SK-N-SH (cell line): ENCODE measurements at regions of chr4 and their contacts with region 1.

Region 1: DNA sequence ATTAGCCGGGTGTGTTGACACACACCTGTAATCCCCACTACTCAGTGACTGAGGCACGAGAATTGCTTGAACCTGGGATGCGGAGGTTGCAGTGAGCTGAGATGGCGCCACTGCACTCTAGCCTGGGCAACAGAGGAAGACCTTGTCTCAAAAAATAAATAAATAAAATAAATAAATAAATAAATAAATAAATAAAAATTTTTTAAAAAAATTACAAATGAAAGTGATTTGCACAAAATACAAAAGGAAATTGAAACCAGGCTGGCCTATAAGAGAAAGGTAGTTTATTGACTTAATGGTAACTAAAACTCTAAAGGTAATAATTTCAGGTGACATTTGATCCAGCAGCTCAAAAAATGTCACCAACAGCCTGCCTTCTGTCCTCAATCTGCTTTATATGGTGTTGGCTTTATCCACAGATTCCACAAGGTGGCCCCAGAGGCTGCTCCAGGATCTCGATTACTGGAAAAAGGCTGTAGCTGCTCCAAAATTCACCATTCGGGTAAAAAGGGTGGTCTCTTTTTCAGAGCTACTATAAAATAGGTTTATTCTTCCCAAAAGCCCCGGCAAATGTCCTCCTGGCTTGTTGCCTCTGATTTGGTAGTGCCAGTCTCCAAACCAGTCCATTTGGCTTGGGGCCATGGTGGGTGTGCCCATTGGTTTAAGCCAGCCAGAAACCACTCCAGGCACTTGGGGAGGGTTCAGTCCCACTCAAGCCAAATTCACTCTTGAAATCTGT is 61.4 kb upstream of the TRIM2 start:
- DNase-seq: peak; percentile 72
- H3K4me3 ChIP-seq: peak overlapping the region; percentile 21 to 55; a peak in 3 of 4 replicates
- H3K27ac ChIP-seq: peak overlapping the region; percentile 66 to 98
- H3K4me1 ChIP-seq: peaks cover 20 to 36% of the 10 kb centered on the region in 2 experiments; a peak in 3 of 4 replicates
- H3K27me3 ChIP-seq: no peaks in the 10 kb centered on the region
- CTCF ChIP-seq: peak; percentile 98
- EP300 ChIP-seq: no peak
- RAD21 ChIP-seq: peak; percentile 97

Region 2: DNA sequence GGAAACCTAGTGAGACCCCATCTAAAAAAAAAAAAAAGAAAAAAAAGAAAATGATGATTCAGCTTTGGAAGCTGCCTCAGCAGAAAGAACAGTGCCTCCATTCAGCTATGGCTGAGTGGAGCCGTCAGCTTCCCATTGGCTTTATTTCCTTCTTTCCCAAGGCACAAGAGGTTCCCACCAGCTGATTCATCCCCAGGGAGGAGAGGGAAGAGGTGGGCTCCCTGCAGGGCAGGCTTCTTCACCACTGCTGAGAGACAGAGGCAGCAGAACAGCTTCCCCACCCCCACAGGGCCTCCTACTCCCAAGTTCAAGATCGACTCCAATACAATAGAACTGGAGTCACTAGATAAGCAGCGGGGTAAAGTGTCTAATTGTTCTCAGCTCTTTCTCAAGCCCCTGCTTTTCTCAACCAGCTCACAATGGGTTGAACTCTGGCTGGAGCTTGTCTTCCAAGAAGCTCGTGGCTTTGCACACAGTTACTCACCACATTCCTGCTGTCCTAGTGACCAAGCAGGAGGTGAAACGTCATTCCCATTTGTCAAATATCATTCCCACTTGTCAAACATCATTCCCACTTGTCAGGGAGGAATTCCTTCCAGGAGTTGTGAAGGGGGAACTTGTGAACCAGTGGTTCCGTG is 159.0 kb before region 1 on chr4:
- CTCF ChIA-PET with region 1: no interaction called
- POLR2A ChIA-PET with region 1: no interaction called
- DNase-seq: no peak
- H3K4me3 ChIP-seq: no peak overlapping the region
- H3K27ac ChIP-seq: no peak overlapping the region
- H3K4me1 ChIP-seq: no peaks in the 10 kb centered on the region
- H3K27me3 ChIP-seq: no peaks in the 10 kb centered on the region; the same call in 1 of the 2 replicates
- CTCF ChIP-seq: no peak
- EP300 ChIP-seq: no peak
- RAD21 ChIP-seq: no peak

Region 3: GRCh38 chr4:153117554-153117953 is 25.3 kb before region 1 on chr4:
- CTCF ChIA-PET with region 1: no interaction called
- POLR2A ChIA-PET with region 1: no interaction called
- DNase-seq: no peak
- H3K4me3 ChIP-seq: no peak overlapping the region
- H3K27ac ChIP-seq: no peak overlapping the region
- H3K4me1 ChIP-seq: peaks cover under 1 to 9% of the 10 kb centered on the region in 2 experiments; a peak in 3 of 4 replicates
- H3K27me3 ChIP-seq: no peaks in the 10 kb centered on the region
- CTCF ChIP-seq: no peak
- EP300 ChIP-seq: no peak
- RAD21 ChIP-seq: no peak

Region 4: DNA sequence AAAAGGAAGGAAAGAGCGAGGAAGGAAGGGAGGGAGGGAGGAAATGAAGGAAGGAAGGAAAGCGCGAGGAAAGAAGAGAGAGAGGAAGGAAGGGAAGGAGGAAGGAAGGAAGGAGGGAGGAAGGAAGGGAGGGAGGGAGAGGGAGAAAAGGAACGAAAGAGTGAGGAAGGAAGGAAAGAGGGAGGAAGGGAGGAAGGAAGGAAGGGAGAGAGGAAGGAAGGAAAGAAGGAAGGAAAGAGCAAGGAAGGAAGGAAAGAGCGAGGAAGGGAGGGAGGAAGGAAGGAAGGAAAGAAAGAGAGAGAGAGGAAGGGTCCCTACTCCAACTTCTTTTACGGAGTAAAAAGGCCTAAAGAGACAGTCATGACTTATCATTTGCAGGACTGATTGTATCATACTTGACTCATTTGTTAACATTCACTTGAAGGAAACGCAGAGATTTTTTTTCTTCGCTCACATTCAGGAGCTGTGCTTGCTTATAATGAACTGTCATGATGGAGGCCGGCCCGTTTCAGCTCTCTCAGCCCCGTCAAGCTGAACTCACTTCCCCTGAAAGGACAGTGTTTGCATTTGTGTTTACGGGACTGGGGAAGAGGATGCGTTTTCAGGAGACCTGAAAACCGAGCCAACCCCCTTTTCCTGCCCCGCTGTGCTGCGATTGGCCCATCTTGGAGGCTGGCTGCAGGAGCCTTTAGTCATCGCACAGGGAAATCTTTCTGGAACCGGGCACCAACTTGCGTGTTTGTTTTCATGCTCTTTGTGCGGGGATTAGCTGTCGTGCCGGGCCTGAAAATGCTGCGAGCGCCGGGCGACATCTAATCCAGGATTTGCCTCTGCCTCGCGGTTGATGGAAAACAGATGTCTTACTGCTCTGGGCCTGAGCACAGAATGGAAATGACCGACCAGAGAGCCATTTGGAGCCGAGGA is 79.2 kb after region 1 on chr4:
- CTCF ChIA-PET with region 1: interaction called, 12 read pairs
- POLR2A ChIA-PET with region 1: interaction called, 5 read pairs
- DNase-seq: peak; percentile 84
- H3K4me3 ChIP-seq: peak overlapping the region; percentile 81 to 84
- H3K27ac ChIP-seq: peak overlapping the region; percentile 97 to 98
- H3K4me1 ChIP-seq: peaks cover 0 to 10% of the 10 kb centered on the region in 2 experiments; a peak in 2 of 4 replicates
- H3K27me3 ChIP-seq: no peaks in the 10 kb centered on the region
- CTCF ChIP-seq: no peak
- EP300 ChIP-seq: peak; percentile 6 to 16; a peak in 1 of 4 replicates
- RAD21 ChIP-seq: peak; percentile 2; the same call in 1 of the 2 replicates

Region 5: DNA sequence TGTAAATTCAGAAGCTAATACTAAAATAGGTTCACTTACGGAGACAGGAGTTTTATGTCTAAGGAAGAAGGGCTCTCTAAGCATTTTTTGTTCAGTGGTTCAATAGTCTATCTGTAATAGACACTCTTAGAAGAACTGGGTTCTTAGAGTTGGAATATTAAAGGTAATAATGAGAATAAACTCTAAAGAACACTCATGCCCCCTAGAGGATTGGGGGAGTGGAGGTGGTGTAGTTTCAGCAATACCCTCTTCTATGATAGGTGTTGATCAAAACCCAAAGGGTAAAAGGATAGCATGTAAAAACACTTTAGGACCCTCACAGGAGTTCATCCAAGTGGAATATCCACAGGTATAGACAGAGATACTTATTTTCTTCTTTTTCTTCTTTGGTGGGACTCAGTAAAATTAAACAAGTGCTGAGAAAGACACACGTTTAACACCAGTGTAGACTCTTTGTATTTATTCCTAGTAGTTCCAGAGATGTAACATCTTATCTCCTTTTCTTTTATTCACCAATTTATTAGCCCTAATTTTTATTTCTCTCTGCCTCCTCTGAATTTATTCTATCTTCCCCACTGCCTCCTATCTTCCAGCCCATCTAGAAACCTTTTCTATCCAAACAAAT is 175.9 kb after region 1 on chr4:
- CTCF ChIA-PET with region 1: interaction called, 37 read pairs
- POLR2A ChIA-PET with region 1: no interaction called
- DNase-seq: peak; percentile 74
- H3K4me3 ChIP-seq: no peak overlapping the region
- H3K27ac ChIP-seq: no peak overlapping the region
- H3K4me1 ChIP-seq: peaks cover 6 to 7% of the 10 kb centered on the region in 2 experiments; a peak in 2 of 4 replicates
- H3K27me3 ChIP-seq: no peaks in the 10 kb centered on the region
- CTCF ChIP-seq: peak; percentile 83
- EP300 ChIP-seq: no peak
- RAD21 ChIP-seq: peak; percentile 91

Region 6: GRCh38 chr4:153326513-153326912 is 183.6 kb after region 1 on chr4:
- CTCF ChIA-PET with region 1: interaction called, 12 read pairs
- POLR2A ChIA-PET with region 1: no interaction called
- DNase-seq: no peak
- H3K4me3 ChIP-seq: no peak overlapping the region
- H3K27ac ChIP-seq: no peak overlapping the region
- H3K4me1 ChIP-seq: no peaks in the 10 kb centered on the region
- H3K27me3 ChIP-seq: no peaks in the 10 kb centered on the region
- CTCF ChIP-seq: no peak
- EP300 ChIP-seq: no peak
- RAD21 ChIP-seq: no peak

Region 7: DNA sequence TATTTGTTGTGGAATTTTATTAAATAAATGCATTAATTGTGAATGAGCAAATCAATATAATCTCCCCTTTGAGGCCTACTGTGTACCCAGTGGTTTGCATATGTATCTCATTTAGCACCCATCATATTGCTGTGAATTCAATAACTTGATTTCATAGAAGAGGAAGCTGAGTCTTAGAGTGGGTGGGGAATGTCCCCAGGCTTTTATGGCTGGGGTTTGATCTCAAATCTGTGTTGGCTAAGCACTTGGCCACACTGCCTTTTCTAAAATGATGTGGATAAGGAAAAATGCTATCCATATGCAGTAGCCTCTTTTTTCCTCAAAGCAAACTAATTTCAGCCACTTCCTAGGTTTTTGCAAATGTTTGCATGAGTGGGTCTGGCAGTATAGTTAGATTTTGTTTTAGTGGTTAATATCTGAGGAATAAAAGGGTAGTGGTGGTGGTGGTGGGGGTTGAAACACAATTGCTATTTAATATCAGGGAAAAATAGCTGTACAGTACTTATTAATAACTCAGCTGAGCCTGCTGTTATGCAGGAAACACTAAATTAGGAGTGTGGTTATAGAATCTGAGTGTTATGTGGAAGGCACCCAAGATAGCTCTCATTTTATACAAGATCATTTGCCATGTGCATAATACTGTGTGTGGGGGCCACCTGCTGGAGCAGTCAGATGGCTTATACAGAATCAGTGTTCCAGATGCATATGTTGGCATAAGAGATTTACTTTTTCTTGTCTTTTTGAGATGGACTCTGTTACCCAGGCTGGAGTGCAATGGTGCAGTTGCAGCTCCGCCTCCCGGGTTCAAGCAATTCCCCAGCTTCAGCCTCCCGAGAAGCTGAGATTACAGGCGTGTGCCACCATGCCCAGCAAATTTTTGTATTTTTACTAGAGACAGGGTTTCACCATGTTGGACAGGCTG is 431.3 kb after region 1 on chr4:
- CTCF ChIA-PET with region 1: interaction called, 10 read pairs
- POLR2A ChIA-PET with region 1: no interaction called
- DNase-seq: peak; percentile 58
- H3K4me3 ChIP-seq: no peak overlapping the region
- H3K27ac ChIP-seq: no peak overlapping the region; a peak in 1 of 4 replicates
- H3K4me1 ChIP-seq: peaks cover 0 to 9% of the 10 kb centered on the region in 2 experiments; a peak in 3 of 4 replicates
- H3K27me3 ChIP-seq: no peaks in the 10 kb centered on the region
- CTCF ChIP-seq: peak; percentile 82
- EP300 ChIP-seq: no peak
- RAD21 ChIP-seq: peak; percentile 93